AG04449 (cell line): ENCODE measurements at regions of chr10 and their contacts with region 1.

Region 1: GRCh38 chr10:104291439-104291951 is 22.5 kb downstream of the GSTO2 start:
- DNase-seq: no peak
- H3K4me3 ChIP-seq: no peak overlapping the region
- CTCF ChIP-seq: peak; percentile 100

Region 2: DNA sequence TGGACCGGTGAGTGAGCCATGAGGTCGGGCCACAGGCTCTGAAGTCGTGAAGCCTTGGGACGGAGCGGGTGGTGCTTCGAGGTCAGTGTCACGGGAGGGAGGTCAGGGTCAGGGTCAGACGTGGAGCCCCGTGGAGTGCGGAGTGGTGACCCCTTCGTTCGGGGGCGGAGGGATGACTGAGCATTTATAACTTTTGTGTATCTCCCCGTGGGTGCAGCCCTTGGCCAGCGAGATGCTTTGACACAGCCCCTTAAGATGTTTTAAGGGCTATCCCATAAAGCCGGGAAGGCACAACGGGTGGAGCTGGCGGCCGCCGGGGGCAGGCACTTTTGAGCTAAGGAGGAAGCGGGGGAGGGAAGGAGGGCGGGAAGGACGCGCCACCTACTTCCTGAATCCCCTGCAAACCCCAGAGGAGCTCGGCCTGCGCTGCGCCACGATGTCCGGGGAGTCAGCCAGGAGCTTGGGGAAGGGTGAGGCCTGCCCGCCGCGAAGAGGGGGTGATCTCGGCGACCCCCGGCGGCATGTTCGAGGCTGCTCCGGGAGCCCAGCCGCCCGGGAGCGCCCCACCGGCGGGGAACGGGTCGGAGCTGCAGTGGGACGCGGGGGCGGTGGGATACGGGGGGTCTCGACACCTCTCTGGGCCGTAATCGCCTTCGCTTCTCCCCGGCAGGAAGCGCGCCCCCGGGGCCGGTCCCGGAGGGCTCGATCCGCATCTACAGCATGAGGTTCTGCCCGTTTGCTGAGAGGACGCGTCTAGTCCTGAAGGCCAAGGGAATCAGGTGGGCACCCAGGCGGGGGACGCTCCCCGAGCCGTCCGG is 36.8 kb before region 1 on chr10 and contains the start of gene GSTO1:
- CTCF ChIA-PET with region 1: interaction called, 20 read pairs
- POLR2A ChIA-PET with region 1: no interaction called
- DNase-seq: no peak
- H3K4me3 ChIP-seq: peak within 1 kb of the TSS; percentile 81
- CTCF ChIP-seq: peak; percentile 3

Region 3: DNA sequence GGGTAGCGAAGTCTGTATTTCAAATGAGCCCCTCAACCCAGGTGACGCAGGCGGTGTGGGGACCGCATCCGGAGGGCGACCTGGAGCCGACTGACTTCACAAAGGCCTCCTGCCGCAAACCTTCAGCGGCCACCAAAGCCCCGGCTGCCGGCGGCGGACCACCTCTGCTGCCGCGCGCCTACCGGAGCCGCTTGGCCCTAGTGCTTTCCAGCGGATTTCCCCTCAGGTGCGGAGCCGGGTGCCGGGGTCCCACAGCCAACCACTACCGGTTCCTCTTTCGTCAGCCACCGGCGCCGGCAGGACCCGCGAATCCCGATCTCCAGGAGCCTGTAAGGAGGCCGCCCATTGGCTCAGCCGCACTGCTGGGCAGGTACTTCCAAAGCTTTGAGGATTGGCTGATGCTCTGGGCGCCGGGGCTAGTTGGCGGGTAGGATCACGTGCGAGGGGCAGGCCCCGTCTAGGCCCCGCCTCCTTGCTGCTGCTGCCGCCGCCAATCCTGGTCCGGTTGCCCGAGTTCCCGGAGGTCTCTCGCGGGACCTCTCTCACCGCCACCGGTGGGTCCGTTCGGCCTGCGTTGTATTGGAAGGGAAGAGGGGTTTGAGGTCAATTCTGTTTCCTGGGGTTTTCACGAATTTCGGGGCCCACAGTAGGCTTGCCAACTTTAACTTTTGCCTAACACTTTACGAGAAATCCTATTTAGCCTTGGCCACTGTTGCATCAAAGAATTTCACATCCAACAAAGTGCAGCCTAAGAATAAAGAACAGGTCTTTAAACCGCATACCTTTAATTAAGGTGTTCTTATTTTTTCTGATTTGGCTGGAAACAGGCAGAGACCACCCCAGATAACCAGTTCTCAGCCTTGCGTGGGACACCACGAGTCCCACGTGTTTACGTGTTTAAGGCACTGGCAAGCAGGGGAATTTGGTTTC is 22.5 kb before region 1 on chr10 and contains the start of gene GSTO2:
- CTCF ChIA-PET with region 1: interaction called, 557 read pairs
- POLR2A ChIA-PET with region 1: interaction called, 4 read pairs
- DNase-seq: peak; percentile 88
- H3K4me3 ChIP-seq: peak within 1 kb of the TSS; percentile 83
- CTCF ChIP-seq: no peak

Region 4: GRCh38 chr10:104308439-104308903 is 17.0 kb after region 1 on chr10:
- CTCF ChIA-PET with region 1: interaction called, 234 read pairs
- POLR2A ChIA-PET with region 1: no interaction called
- DNase-seq: no peak
- H3K4me3 ChIP-seq: no peak overlapping the region
- CTCF ChIP-seq: no peak

Region 5: DNA sequence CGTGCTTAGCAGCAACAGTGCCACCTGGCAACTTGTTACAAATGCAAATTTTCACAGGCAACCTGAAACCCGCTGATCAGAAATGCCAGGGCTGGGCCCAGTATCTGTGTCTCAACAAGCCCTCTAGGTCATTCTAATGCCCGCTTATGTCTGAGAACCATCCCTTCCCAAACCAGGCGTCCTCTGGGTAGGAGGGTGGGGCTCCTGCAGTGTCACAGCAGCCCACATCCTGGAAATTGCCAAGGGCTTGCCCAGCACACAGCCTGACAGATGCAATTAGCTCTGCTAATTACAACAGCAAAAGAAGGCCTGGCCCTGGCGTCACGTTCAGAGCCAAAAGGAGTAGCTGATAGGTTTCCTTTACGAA is 30.9 kb after region 1 on chr10:
- CTCF ChIA-PET with region 1: interaction called, 27 read pairs
- POLR2A ChIA-PET with region 1: no interaction called
- DNase-seq: no peak
- H3K4me3 ChIP-seq: no peak overlapping the region
- CTCF ChIP-seq: no peak

Region 6: DNA sequence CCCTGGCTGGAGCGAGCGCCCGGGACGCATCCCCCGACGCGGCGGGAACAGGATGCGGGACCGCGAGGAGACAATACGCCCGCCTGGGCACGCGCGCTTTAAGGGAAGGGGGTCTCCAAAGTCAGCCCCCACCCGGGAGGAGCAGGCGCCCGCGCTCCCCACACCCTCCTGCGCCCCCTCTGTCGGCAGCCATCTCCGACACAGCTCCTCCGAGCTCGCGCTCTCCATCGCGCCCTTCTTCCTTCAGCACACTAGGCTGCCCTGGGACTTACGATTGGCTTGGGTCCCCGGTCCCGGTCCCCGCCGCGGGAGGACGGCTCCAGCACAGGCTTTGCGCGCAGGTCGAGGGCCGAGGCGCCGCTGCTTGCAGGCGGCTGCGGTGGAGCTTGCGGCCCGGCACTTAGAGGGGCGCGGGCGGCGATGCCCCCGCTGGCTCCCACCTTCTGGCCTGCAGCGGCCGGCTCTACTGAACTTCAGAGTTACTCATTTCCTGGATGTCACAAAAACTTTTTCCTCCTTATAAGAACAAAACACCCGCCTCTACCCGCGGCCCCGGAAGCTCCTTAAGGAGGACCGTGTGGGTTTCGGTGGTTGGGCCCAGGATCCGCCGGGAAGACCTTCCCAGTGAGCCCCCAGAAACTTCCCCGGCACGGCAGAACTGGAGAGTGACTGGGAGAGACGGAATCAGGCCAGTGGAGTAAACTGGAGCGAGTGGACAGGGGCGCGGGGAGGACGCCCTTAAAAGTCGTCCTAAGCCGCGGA is 46.7 kb after region 1 on chr10 and contains the start of gene ITPRIP:
- CTCF ChIA-PET with region 1: interaction called, 108 read pairs
- POLR2A ChIA-PET with region 1: interaction called, 3 read pairs
- DNase-seq: no peak
- H3K4me3 ChIP-seq: peak within 1 kb of the TSS; percentile 85
- CTCF ChIP-seq: peak; percentile 28